PC-3 (cell line): ENCODE measurements at regions of chr15 and their contacts with region 1.

Region 1: GRCh38 chr15:80072285-80072994 is 13.0 kb downstream of the ZFAND6 start:
- DNase-seq: peak; percentile 92
- ATAC-seq: peak; percentile 94
- H3K4me3 ChIP-seq: peak overlapping the region; percentile 78
- H3K27ac ChIP-seq: no peak overlapping the region
- H3K4me1 ChIP-seq: peaks cover 32% of the 10 kb centered on the region
- H3K27me3 ChIP-seq: no peaks in the 10 kb centered on the region
- CTCF ChIP-seq: no peak

Region 2: GRCh38 chr15:80087100-80087499 is 14.7 kb after region 1 on chr15:
- CTCF ChIA-PET with region 1: no interaction called
- POLR2A ChIA-PET with region 1: no interaction called
- intact Hi-C with region 1: no loop called
- DNase-seq: no peak
- ATAC-seq: no peak
- H3K4me3 ChIP-seq: no peak overlapping the region
- H3K27ac ChIP-seq: no peak overlapping the region
- H3K4me1 ChIP-seq: no peaks in the 10 kb centered on the region
- H3K27me3 ChIP-seq: no peaks in the 10 kb centered on the region
- CTCF ChIP-seq: no peak

Region 3: GRCh38 chr15:80105595-80106450 is 33.4 kb after region 1 on chr15:
- CTCF ChIA-PET with region 1: no interaction called
- POLR2A ChIA-PET with region 1: no interaction called
- intact Hi-C with region 1: loop called (anchors 5 kb)
- DNase-seq: peak; percentile 84
- ATAC-seq: peak; percentile 91
- H3K4me3 ChIP-seq: peak overlapping the region; percentile 45
- H3K27ac ChIP-seq: peak overlapping the region; percentile 95
- H3K4me1 ChIP-seq: peaks cover 30% of the 10 kb centered on the region
- H3K27me3 ChIP-seq: no peaks in the 10 kb centered on the region
- CTCF ChIP-seq: no peak

Region 4: DNA sequence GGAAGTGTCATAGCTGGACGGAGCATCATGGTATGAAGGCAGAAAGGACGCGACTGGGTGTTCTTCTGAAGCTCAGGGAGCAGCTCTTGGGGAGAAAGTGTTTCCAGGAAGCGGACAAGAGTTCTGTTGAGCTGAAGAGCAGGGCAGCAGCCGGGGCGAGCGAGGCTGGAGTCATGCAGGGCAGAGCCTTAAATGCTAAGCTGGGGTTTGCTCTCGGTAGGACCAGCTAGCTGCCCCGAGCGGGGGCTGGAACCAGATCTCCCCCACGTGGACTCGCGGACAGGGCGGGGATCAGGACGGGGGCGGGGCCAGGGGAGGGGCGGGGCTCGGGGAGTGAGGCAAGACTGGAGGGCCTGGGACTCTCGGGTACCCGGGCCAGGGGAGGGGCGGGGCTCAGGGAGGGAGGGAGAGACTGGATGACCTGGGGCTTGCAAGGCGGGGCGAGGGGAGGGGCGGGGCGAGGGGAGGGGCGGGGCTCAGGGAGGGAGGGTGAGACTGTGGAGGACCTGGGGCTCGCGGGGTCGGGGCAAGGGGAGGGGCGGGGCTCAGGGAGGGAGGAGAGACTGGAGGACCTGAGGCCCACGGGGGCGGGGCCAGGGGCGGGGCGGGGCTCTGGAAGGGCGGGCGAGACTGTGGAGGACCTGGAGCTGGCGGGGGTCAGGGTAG is 79.9 kb after region 1 on chr15:
- CTCF ChIA-PET with region 1: no interaction called
- POLR2A ChIA-PET with region 1: no interaction called
- intact Hi-C with region 1: loop called (anchors 5 kb)
- DNase-seq: peak; percentile 86
- ATAC-seq: peak; percentile 69
- H3K4me3 ChIP-seq: peak overlapping the region; percentile 67
- H3K27ac ChIP-seq: no peak overlapping the region
- H3K4me1 ChIP-seq: peaks cover 9% of the 10 kb centered on the region; the same call in 1 of the 2 replicates
- H3K27me3 ChIP-seq: no peaks in the 10 kb centered on the region
- CTCF ChIP-seq: no peak